Naive thymus-derived CD8-positive, alpha-beta T cell (primary cell): ENCODE measurements at regions of chr22 and their contacts with region 1.

Region 1: GRCh38 chr22:17084554-17085276 is at the start of gene IL17RA:
- DNase-seq: peak; percentile 84 to 96 (median 93)
- ATAC-seq: peak; percentile 80 to 85
- H3K4me3 Mint-ChIP-seq: peak within 1 kb of the TSS; percentile 86 to 99 (median 96)
- H3K27ac Mint-ChIP-seq: peak within 1 kb of the TSS; percentile 92 to 97 (median 96)
- H3K4me1 Mint-ChIP-seq: peaks cover 28 to 48% (median 43%) of the 10 kb centered on the region in 4 donors
- H3K27me3 Mint-ChIP-seq: no peaks in the 10 kb centered on the region
- polyA plus RNA-seq, gene IL17RA: 26.2 to 57.7 (median 48.8) TPM

Region 2: GRCh38 chr22:17095538-17095937 is 10.8 kb after region 1 on chr22:
- POLR2A ChIA-PET with region 1: interaction called, 53 read pairs
- DNase-seq: peak in 1 of 10 donors; percentile 23
- ATAC-seq: no peak
- H3K4me3 Mint-ChIP-seq: peak overlapping the region in 4 of 10 donors; percentile 33 to 50 (median 36)
- H3K27ac Mint-ChIP-seq: peak overlapping the region in 6 of 10 donors; percentile 23 to 83 (median 66)
- H3K4me1 Mint-ChIP-seq: peaks cover 46 to 97% (median 92%) of the 10 kb centered on the region in 4 donors
- H3K27me3 Mint-ChIP-seq: no peaks in the 10 kb centered on the region

Region 3: GRCh38 chr22:17106785-17107546 is 22.3 kb after region 1 on chr22:
- POLR2A ChIA-PET with region 1: interaction called, 67 read pairs
- DNase-seq: peak in 3 of 10 donors; percentile 43 to 58 (median 47)
- ATAC-seq: peak; percentile 83 to 84
- H3K4me3 Mint-ChIP-seq: peak overlapping the region; percentile 70 to 89 (median 86)
- H3K27ac Mint-ChIP-seq: peak overlapping the region; percentile 81 to 95 (median 92)
- H3K4me1 Mint-ChIP-seq: peaks cover 37 to 77% (median 58%) of the 10 kb centered on the region in 4 donors
- H3K27me3 Mint-ChIP-seq: no peaks in the 10 kb centered on the region

Region 4: DNA sequence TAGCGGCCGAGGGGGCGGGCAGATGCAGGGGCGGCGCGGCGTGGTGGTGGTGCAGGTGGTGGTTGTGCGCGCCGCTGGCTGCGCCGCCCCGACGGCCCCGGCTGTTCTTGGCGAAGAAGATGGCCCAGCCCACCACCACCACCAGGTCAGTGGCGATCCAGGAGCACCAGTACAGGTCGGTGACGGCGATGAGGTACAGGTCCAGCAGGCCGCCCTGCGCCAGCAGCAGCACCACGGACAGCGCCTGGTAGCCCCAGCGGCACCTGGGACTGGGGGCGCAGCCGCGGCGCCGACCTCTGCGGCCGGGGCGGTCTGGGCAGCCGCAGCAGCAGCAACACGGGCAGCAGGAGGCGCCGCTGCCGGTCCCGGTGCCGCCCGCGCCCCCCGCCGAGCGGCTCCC is 35.6 kb after region 1 on chr22:
- POLR2A ChIA-PET with region 1: interaction called, 74 read pairs
- DNase-seq: peak; percentile 27 to 77 (median 58)
- ATAC-seq: peak; percentile 59 to 76
- H3K4me3 Mint-ChIP-seq: peak overlapping the region in 6 of 10 donors; percentile 25 to 80 (median 47)
- H3K27ac Mint-ChIP-seq: no peak overlapping the region
- H3K4me1 Mint-ChIP-seq: peaks cover 32 to 51% (median 47%) of the 10 kb centered on the region in 4 donors
- H3K27me3 Mint-ChIP-seq: peaks cover 6 to 20% (median 8%) of the 10 kb centered on the region in 5 donors

Region 5: GRCh38 chr22:17158568-17159503 is 74.1 kb after region 1 on chr22 and contains the start of gene HDHD5:
- POLR2A ChIA-PET with region 1: interaction called, 36 read pairs
- DNase-seq: peak; percentile 80 to 94 (median 86)
- ATAC-seq: peak; percentile 90 to 92
- H3K4me3 Mint-ChIP-seq: peak within 1 kb of the TSS; percentile 79 to 90 (median 86)
- H3K27ac Mint-ChIP-seq: peak within 1 kb of the TSS; percentile 38 to 91 (median 78)
- H3K4me1 Mint-ChIP-seq: peaks cover 9 to 42% (median 36%) of the 10 kb centered on the region in 4 donors
- H3K27me3 Mint-ChIP-seq: no peaks in the 10 kb centered on the region
- polyA plus RNA-seq, gene HDHD5: 48.5 to 72.7 (median 59.8) TPM